ENCODE measurements at regions of chr13 and their contacts with region 1.

Region 1: DNA sequence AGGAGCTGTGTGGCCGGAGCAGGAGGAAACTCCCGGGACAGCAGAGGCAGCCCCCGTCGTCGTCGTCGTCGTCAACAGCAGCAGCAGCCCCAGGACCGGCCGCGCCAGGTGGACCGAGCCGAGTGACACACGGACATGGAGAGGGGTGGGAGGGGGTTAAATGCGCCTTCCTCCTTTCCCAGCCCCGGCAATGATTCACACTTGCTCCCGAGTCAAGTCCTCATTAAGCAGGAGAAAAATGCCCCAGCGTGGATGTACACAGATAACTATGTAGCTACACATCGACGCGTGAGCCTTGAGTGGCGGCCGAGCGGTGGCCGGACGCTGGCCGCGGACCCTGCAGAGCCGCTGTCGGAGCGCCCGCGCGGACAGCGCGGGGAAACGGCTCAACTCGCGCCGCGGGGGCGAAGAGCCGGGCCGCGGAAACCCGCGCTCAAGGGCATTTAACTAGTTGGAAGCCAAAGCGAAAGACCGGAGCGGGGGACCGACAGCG is 640 bp downstream of the UBL3 start:
- DNase-seq: peak; percentile 40

Region 2: GRCh38 chr13:29532116-29532515 is 317.7 kb before region 1 on chr13:
- in situ Hi-C with region 1: no loop called
- DNase-seq: peak; percentile 27

Region 3: GRCh38 chr13:30114571-30115256 is 264.9 kb after region 1 on chr13:
- in situ Hi-C with region 1: loop called (anchors 25 kb)
- DNase-seq: peak; percentile 89

Region 4: DNA sequence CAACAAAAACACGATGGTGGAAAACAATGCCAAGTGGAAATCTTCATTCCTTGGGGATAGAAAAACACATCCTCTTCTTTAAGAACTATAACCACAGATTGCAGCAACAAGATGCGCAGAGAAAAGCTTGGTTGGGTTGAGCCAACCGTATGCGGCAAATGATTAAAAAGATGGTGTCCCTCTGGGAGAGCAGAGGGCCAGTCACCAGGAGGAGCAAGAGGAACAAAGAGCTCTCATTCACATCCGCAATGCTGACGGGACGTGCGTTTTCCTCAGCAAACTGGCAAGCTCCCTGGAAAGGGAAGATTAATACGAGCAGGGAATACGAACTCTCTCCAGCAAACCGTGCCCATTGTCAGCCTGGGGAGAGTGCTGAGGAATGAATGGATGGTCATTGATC is 316.0 kb after region 1 on chr13:
- in situ Hi-C with region 1: no loop called
- DNase-seq: peak; percentile 69